ENCODE measurements at regions of chr7 and their contacts with region 1.

Region 1: DNA sequence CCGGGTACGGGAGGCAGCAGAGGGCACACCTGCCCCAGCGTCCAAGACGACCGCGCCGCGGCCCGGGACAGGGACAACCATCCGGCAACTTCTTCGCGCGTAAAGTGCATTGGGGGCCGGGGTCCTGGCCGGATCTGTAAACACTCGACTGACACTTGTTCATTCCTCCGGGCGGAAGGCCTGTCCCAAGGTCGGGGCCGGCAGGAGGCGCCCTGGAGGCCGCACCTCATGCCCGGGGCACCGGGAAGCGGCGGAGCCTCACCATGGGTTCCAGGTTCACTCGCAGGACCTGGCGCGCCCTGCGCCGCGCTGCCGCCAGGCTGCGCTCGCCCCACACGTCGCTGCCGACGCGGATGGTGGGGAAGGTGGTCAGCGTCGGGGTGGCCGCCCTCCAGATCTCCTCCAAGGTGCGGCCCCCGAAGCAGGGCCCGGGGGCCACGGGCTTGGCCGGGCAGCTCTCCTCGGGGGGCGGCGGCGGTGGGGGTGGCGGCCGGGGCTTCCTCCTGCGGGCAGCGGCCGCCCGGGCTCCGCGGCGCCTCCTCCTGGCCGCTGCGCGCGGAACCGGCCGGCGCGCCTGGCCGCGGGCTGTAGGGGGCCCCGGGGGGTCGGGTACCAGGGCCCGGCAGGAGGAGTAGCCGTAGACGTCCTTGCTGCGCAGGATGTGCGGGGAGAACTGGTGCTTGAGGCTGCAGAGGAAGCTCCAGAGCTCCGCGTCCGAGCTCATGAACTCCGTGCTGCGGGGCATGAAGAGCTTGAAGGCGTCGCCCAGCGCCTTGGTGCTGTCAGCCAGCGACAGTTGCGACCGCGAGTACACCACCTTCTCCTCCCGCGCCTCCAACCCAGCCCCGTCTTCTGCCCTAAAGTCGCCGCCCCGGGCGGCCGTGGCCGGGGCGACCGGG is 746 bp downstream of the CCDC71L start:
- DNase-seq: peak; percentile 87
- H3K4me3 ChIP-seq: peak overlapping the region; percentile 50 to 100 (median 98)
- H3K27ac ChIP-seq: peak overlapping the region; percentile 90
- H3K4me1 ChIP-seq: peaks cover 22% of the 10 kb centered on the region
- H3K27me3 ChIP-seq: no peaks in the 10 kb centered on the region
- CTCF ChIP-seq: peak; percentile 86 to 89
- POLR2A ChIP-seq: peak; percentile 68

Region 2: GRCh38 chr7:106041140-106041717 is 619.0 kb before region 1 on chr7:
- CTCF ChIA-PET with region 1: no interaction called
- POLR2A ChIA-PET with region 1: no interaction called
- dilution Hi-C with region 1: no loop called
- intact Hi-C with region 1: no loop called
- DNase-seq: peak; percentile 35
- H3K4me3 ChIP-seq: no peak overlapping the region
- H3K27ac ChIP-seq: no peak overlapping the region
- H3K4me1 ChIP-seq: no peaks in the 10 kb centered on the region
- H3K27me3 ChIP-seq: peaks cover 4 to 8% of the 10 kb centered on the region in 2 experiments
- CTCF ChIP-seq: peak; percentile 79 to 89
- POLR2A ChIP-seq: no peak

Region 3: GRCh38 chr7:106285051-106285854 is 375.0 kb before region 1 on chr7:
- CTCF ChIA-PET with region 1: interaction called, 4 read pairs
- POLR2A ChIA-PET with region 1: interaction called, 3 read pairs
- dilution Hi-C with region 1: no loop called
- intact Hi-C with region 1: loop called (anchors 2 kb)
- DNase-seq: peak; percentile 99
- H3K4me3 ChIP-seq: peak overlapping the region; percentile 56 to 80 (median 72)
- H3K27ac ChIP-seq: peak overlapping the region; percentile 80
- H3K4me1 ChIP-seq: peaks cover 27% of the 10 kb centered on the region
- H3K27me3 ChIP-seq: no peaks in the 10 kb centered on the region
- CTCF ChIP-seq: no peak
- POLR2A ChIP-seq: peak; percentile 93

Region 4: GRCh38 chr7:106542550-106543220 is 117.5 kb before region 1 on chr7:
- CTCF ChIA-PET with region 1: interaction called, 191 read pairs
- POLR2A ChIA-PET with region 1: interaction called, 7 read pairs
- dilution Hi-C with region 1: no loop called
- intact Hi-C with region 1: loop called (anchors 1 kb)
- DNase-seq: peak; percentile 96
- H3K4me3 ChIP-seq: no peak overlapping the region
- H3K27ac ChIP-seq: peak overlapping the region; percentile 59
- H3K4me1 ChIP-seq: peaks cover 44% of the 10 kb centered on the region
- H3K27me3 ChIP-seq: no peaks in the 10 kb centered on the region
- CTCF ChIP-seq: peak; percentile 62 to 68
- POLR2A ChIP-seq: no peak

Region 5: DNA sequence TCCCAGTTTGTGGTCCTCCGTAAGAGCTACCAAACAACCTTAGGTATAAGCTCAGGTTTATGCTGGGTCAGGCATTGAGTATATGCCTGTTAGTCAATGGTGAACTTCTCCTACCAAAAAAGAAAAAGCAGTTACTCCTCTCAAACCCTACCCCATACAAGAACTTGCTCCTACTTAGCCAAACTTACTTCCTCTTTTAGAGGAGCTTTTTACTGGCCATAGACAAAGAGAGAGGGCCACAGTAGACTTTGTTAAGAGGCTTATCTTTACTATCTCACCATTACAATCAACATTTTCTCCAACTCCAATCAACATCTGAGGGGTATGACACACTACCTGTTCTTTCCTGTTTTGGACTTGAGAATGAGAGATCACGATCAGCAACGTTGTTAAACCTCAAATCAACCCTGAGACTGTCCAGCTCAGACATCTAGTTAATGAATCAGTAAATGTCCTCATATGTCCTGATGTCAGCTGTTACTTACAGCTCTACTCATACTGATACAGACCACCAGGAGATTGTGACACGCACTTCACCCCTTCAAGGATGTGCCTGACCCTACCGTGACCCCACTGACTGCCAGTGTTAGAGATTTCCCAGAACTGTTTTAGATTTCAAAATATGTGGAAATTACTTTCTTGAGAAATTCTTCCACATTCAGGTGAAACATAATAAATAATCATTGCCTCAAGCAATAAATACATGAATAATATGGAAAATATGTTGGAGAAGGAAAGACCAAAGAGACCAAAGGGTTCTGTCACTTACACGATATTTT is 19.1 kb after region 1 on chr7:
- CTCF ChIA-PET with region 1: interaction called, 11 read pairs
- POLR2A ChIA-PET with region 1: no interaction called
- dilution Hi-C with region 1: no loop called
- intact Hi-C with region 1: loop called (anchors 1 kb)
- DNase-seq: peak; percentile 73
- H3K4me3 ChIP-seq: no peak overlapping the region
- H3K27ac ChIP-seq: peak overlapping the region; percentile 47
- H3K4me1 ChIP-seq: peaks cover 22% of the 10 kb centered on the region
- H3K27me3 ChIP-seq: no peaks in the 10 kb centered on the region
- CTCF ChIP-seq: no peak
- POLR2A ChIP-seq: no peak

Region 6: GRCh38 chr7:106736508-106737201 is 76.4 kb after region 1 on chr7:
- CTCF ChIA-PET with region 1: interaction called, 158 read pairs
- POLR2A ChIA-PET with region 1: interaction called, 8 read pairs
- dilution Hi-C with region 1: no loop called
- intact Hi-C with region 1: loop called (anchors 1 kb)
- DNase-seq: peak; percentile 84
- H3K4me3 ChIP-seq: no peak overlapping the region
- H3K27ac ChIP-seq: peak overlapping the region; percentile 37
- H3K4me1 ChIP-seq: peaks cover 18% of the 10 kb centered on the region
- H3K27me3 ChIP-seq: no peaks in the 10 kb centered on the region
- CTCF ChIP-seq: peak; percentile 65 to 74
- POLR2A ChIP-seq: no peak

Region 7: DNA sequence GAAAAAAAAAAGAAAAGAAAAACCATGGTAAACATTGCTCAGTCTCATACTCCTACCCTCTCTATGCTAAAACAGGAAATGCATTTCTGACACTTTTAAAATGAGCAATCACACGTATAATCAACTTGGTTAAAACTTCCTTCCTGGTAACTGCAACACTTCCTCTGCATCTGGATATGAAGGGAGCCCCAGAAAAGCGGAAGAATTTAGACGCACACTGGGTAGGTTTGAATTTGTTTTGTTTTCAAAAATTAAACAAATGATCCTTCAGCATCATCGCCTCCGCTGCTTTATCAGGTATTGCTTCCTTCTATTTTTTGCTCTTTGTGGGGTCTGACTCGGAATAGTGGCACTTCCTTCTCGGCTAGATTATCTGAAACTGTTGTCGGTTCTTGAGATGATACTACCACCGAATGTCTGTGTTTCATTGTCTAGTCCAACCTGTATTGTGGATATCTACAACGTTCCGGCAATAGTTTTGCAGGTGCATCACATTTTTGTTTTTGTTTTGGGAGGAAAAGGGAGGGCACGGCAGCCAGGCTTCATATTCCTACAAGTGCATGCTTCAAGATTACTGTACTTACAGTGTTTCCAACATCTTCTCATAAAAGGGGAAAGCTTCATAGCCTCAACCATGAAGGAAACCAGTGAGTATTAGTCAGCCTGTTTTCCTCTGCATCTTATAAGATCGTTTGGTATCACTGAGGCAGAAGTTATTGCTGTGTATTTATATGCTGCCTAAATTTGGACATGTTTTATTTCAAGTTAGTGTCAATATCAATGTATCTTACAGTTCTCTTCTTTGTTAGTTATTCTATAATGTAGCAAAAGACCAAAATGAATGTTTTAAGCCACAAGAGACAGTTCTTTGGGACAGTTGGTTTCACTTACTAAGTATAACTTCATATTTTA is 205.2 kb after region 1 on chr7 and contains the start of gene PIK3CG:
- CTCF ChIA-PET with region 1: interaction called, 3 read pairs
- POLR2A ChIA-PET with region 1: no interaction called
- dilution Hi-C with region 1: no loop called
- intact Hi-C with region 1: loop called (anchors 1 kb)
- DNase-seq: peak; percentile 64
- H3K4me3 ChIP-seq: peak within 1 kb of the TSS; percentile 29 to 87 (median 80)
- H3K27ac ChIP-seq: peak within 1 kb of the TSS; percentile 51
- H3K4me1 ChIP-seq: peaks cover 25% of the 10 kb centered on the region
- H3K27me3 ChIP-seq: no peaks in the 10 kb centered on the region
- CTCF ChIP-seq: no peak
- POLR2A ChIP-seq: peak; percentile 50
- total RNA-seq, gene PIK3CG: 4.9 and 6.2 TPM in 2 replicates

Measured in endothelial cell of umbilical vein (primary cell).